ENCODE measurements at regions of chr2 and their contacts with region 1.

Region 1: GRCh38 chr2:165401285-165401852 is 68.1 kb upstream of the CSRNP3 start:
- DNase-seq: no peak
- H3K4me3 Mint-ChIP-seq: no peak overlapping the region
- H3K27ac Mint-ChIP-seq: no peak overlapping the region
- H3K4me1 Mint-ChIP-seq: no peaks in the 10 kb centered on the region
- H3K27me3 Mint-ChIP-seq: peaks cover 19% of the 10 kb centered on the region

Region 2: DNA sequence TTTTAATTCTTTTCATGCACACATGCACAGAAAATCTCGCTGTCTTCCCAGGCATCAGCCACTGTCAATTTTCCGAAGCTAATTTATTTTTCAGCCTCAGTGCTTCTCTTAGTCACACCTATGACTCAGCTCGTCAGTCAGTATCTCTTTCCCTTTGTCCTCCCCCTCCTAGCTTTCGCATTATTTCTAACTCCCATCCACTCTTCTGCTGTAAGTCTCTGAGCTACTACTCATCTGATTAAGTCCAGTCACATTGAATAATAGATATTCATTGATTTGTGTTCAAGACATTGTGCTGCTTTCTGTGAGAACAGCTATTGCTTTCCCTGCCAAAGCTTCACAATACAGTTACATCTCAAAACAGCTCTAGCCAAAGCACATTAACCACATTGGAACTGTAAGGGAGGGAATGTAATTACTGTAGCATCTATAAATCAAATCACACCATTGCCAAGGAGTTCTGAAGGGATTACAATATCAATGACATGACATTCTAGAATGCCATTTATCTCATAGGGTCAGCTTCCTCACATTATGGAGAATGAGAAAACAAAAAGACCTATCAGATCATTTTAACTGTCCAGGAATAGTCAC is 286.9 kb before region 1 on chr2:
- CTCF ChIA-PET with region 1: no interaction called
- POLR2A ChIA-PET with region 1: no interaction called
- DNase-seq: no peak
- H3K4me3 Mint-ChIP-seq: no peak overlapping the region
- H3K27ac Mint-ChIP-seq: no peak overlapping the region
- H3K4me1 Mint-ChIP-seq: no peaks in the 10 kb centered on the region
- H3K27me3 Mint-ChIP-seq: peaks cover 2% of the 10 kb centered on the region

Region 3: GRCh38 chr2:165369131-165369935 is 32.0 kb before region 1 on chr2:
- CTCF ChIA-PET with region 1: no interaction called
- POLR2A ChIA-PET with region 1: no interaction called
- DNase-seq: no peak
- H3K4me3 Mint-ChIP-seq: no peak overlapping the region
- H3K27ac Mint-ChIP-seq: no peak overlapping the region
- H3K4me1 Mint-ChIP-seq: no peaks in the 10 kb centered on the region
- H3K27me3 Mint-ChIP-seq: no peaks in the 10 kb centered on the region

Region 4: DNA sequence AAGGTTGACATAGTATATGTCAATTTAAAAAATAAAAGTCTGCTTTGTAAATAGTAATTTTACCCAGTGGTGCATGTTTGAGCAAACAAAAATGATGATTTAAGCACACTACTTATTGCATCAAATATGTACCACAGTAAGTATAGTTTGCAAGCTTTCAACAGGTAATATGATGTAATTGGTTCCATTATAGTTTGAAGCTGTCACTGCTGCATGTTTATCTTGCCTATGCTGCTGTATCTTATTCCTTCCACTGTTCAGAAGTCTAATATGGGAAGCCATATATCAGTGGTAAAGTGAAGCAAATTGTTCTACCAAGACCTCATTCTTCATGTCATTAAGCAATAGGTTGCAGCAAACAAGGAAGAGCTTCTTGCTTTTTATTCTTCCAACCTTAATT is 10.5 kb before region 1 on chr2:
- CTCF ChIA-PET with region 1: interaction called, 11 read pairs
- POLR2A ChIA-PET with region 1: no interaction called
- DNase-seq: no peak
- H3K4me3 Mint-ChIP-seq: no peak overlapping the region
- H3K27ac Mint-ChIP-seq: no peak overlapping the region
- H3K4me1 Mint-ChIP-seq: peaks cover 6% of the 10 kb centered on the region
- H3K27me3 Mint-ChIP-seq: peaks cover 9% of the 10 kb centered on the region

Measured in activated CD4-positive, alpha-beta memory T cell treated with anti-CD3 and anti-CD28 coated beads, Interleukin-2, amount 10 ng/mL, durations not matched to agents 7 days and 5 days (primary cell).